A549 (cell line): ENCODE measurements at regions of chr17 and their contacts with region 1.

Region 1: DNA sequence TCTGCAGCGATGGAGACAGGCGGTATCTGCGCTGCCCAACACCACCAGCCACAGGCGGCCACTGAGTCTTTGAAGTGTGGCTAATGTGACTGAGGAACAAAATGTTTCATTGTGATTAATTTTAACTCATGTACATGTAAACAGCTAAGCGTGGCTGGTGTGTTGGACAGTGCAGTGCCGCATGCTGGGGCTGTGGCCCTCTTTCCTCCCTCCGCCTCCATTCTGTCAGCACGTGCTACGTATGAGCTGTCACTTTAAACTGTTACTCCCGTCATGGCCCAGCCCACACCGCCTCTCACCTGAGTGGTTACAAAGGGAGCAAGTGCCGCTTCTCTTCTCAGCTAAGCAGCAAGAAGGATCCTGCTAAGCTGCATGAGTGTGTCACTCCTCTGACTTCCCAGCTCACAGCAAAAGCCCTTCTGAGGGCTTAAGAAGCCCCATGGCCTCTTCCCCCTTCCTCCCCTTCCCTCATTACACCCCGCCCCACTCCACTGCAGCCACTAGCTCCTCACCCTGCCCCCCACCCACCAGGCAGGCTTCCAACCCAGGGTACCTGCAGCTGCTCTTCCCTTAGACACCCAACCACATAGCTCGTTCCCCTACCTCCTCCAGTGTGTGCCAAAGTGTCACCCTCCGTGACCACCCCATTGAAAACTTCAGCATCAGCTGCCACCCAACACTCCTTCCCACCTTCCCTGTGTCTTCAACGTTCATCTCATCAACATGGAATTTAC is 15.0 kb downstream of the HASPIN start:
- DNase-seq: no peak
- ATAC-seq: 0 out of 6 replicates have a peak, but pooled peaks of 1 of the 2 experiments have one; percentile 10
- H3K4me3 ChIP-seq: no peak overlapping the region
- H3K27ac ChIP-seq: peak overlapping the region in 1 of 2 experiments; percentile 25; a peak in 1 of 6 replicates
- H3K4me1 ChIP-seq: peaks cover 3% of the 10 kb centered on the region; the same call in 1 of the 3 replicates
- CTCF ChIP-seq: no peak
- EP300 ChIP-seq: no peak
- POLR2A ChIP-seq: no peak
- RAD21 ChIP-seq: no peak

Region 2: DNA sequence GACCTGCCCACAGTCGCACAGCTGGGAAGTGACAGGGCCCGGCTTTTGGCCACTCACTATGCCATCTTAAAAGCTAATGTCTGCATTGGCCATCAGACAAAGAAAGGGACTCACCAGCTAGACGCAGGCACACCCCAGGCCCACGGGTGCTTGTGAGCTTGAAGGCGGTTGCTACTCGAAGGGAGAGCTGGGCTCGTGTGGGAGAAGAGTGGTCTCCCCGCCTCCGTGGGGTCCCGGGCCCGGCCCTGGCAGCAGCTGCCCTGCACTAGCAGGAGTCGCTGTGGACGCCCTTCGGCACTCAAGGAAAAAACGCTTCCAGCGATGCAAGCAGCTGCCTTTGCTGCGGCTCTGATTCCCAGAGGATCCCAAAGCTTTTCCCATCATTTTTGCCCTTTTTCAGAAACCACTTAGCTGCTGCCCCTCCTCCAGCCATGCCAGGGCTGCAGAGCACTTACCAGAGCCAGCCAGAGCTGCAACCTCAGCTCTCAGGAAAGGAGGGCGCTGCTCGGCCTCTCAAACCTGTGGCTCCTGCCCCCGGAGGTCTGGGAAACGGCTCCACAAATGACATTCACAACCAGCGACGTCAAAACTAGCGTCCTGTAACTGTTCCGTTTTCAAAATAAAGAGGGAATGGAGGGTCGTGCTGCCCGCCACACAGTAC is 141.8 kb before region 1 on chr17:
- CTCF ChIA-PET with region 1: no interaction called
- POLR2A ChIA-PET with region 1: no interaction called
- DNase-seq: no peak
- ATAC-seq: no peak
- H3K4me3 ChIP-seq: no peak overlapping the region
- H3K27ac ChIP-seq: no peak overlapping the region
- H3K4me1 ChIP-seq: no peaks in the 10 kb centered on the region
- CTCF ChIP-seq: no peak
- EP300 ChIP-seq: no peak
- POLR2A ChIP-seq: no peak
- RAD21 ChIP-seq: no peak

Region 3: GRCh38 chr17:3754458-3755334 is 16.0 kb after region 1 on chr17:
- CTCF ChIA-PET with region 1: interaction called, 176 read pairs
- POLR2A ChIA-PET with region 1: no interaction called
- DNase-seq: peak in 1 of 2 experiments; percentile 58
- ATAC-seq: peak; percentile 54 to 75
- H3K4me3 ChIP-seq: peak overlapping the region; percentile 36
- H3K27ac ChIP-seq: peak overlapping the region in 1 of 2 experiments; percentile 45; a peak in 2 of 6 replicates
- H3K4me1 ChIP-seq: peaks cover 9% of the 10 kb centered on the region; the same call in 1 of the 3 replicates
- CTCF ChIP-seq: no peak
- EP300 ChIP-seq: no peak
- POLR2A ChIP-seq: no peak
- RAD21 ChIP-seq: no peak

Region 4: GRCh38 chr17:3796110-3796821 is 57.5 kb after region 1 on chr17:
- CTCF ChIA-PET with region 1: interaction called, 104 read pairs
- POLR2A ChIA-PET with region 1: no interaction called
- DNase-seq: no peak
- ATAC-seq: no peak
- H3K4me3 ChIP-seq: no peak overlapping the region
- H3K27ac ChIP-seq: peak overlapping the region; percentile 29 to 84; a peak in 3 of 6 replicates
- H3K4me1 ChIP-seq: peaks cover 39% of the 10 kb centered on the region
- CTCF ChIP-seq: no peak
- EP300 ChIP-seq: no peak
- POLR2A ChIP-seq: no peak
- RAD21 ChIP-seq: no peak

Region 5: DNA sequence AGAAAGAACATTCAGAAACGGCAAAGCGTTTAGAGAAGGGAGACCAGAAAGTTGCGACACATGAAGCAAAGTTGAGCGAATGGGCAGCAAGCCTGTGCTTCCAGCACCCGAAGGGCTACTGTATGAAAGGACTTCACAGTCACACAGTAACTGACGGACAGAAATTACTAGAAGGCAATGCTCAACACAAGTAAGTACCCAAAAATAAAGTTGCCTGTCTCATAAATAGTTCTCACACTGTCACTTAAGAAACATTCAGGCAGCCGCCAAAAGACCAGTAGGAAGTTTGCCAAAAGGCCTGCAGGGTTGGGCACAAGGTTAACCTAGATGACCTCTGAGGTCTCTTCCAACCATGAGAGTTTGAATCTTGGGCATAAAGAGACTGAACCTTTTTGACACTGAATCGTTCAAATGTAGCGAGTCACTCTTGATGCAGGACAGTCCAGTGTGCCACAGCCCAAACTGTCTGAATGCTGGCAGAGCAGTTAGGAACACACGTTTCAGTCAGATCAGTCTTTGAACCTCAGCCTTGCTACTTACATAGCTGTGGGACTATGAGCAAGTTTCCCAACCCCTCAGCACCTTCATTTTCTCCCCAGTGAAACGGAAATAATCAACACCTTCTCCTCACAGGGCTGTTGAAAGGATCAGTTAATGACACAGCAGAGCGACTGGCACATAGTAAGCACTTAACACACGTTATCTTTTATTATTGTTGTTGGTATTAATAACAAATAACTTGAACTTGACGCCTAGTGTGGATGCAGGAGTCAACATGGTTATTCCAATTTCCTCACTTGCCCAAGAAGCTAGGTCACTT is 96.9 kb after region 1 on chr17:
- CTCF ChIA-PET with region 1: interaction called, 491 read pairs
- POLR2A ChIA-PET with region 1: no interaction called
- DNase-seq: no peak
- ATAC-seq: peak in 1 of 2 experiments; percentile 13; a peak in 2 of 6 replicates
- H3K4me3 ChIP-seq: no peak overlapping the region
- H3K27ac ChIP-seq: no peak overlapping the region
- H3K4me1 ChIP-seq: no peaks in the 10 kb centered on the region
- CTCF ChIP-seq: no peak
- EP300 ChIP-seq: no peak
- POLR2A ChIP-seq: no peak
- RAD21 ChIP-seq: no peak

Region 6: GRCh38 chr17:3879186-3879585 is 140.5 kb after region 1 on chr17:
- CTCF ChIA-PET with region 1: interaction called, 11 read pairs
- POLR2A ChIA-PET with region 1: no interaction called
- DNase-seq: no peak
- ATAC-seq: peak in 1 of 2 experiments; percentile 12; a peak in 1 of 6 replicates
- H3K4me3 ChIP-seq: no peak overlapping the region
- H3K27ac ChIP-seq: no peak overlapping the region
- H3K4me1 ChIP-seq: no peaks in the 10 kb centered on the region
- CTCF ChIP-seq: no peak
- EP300 ChIP-seq: no peak
- POLR2A ChIP-seq: no peak
- RAD21 ChIP-seq: no peak

Region 7: DNA sequence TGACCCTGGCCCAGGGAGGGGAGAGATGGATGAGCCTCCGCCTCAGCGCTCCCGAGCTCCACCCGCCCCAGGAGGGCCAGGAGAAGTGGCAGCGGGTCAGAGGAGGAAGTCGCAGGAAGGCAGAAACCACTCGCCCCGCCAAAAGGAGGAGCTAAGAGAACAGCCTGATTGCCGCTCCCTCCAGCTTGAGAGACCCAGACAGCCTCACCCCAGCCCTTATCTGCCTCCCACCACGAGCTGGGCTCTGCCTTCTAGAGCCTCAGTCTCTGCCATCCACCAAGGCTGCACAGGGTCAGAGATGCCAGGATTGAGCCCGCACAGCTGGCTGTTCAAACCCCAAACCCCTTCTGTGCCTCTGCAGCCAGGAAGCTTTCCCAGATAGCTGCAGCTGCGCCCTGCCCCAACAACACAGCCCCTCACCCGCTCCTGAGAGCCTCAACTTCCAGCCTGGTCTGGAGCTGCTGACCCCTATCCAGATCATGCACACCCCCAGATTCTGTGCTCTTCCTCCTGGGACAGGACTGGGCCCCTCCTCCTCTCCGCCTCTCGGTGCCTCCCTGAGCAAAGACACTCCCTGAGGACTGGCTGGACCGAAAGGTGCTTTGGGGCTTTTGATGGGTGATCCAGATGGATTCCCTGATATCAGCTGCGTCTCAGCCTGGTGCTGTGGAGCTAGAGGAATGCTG is 226.5 kb after region 1 on chr17:
- CTCF ChIA-PET with region 1: interaction called, 11 read pairs
- POLR2A ChIA-PET with region 1: no interaction called
- DNase-seq: peak; percentile 83 to 92
- ATAC-seq: peak; percentile 86 to 94
- H3K4me3 ChIP-seq: peak overlapping the region; percentile 55
- H3K27ac ChIP-seq: peak overlapping the region; percentile 74 to 86
- H3K4me1 ChIP-seq: peaks cover 24% of the 10 kb centered on the region
- CTCF ChIP-seq: no peak
- EP300 ChIP-seq: no peak
- POLR2A ChIP-seq: peak; percentile 64
- RAD21 ChIP-seq: peak; percentile 40 to 45; a peak in 3 of 5 replicates

Region 8: GRCh38 chr17:4310349-4311060 is 571.8 kb after region 1 on chr17:
- CTCF ChIA-PET with region 1: no interaction called
- POLR2A ChIA-PET with region 1: no interaction called
- DNase-seq: no peak
- ATAC-seq: no peak
- H3K4me3 ChIP-seq: no peak overlapping the region
- H3K27ac ChIP-seq: no peak overlapping the region
- H3K4me1 ChIP-seq: peaks cover 33% of the 10 kb centered on the region
- CTCF ChIP-seq: no peak
- EP300 ChIP-seq: no peak
- POLR2A ChIP-seq: no peak
- RAD21 ChIP-seq: no peak